Heart left ventricle (tissue), 16 donors: ENCODE measurements at regions of chr12 and their contacts with region 1.

Region 1: GRCh38 chr12:57865090-57865751 is 18.7 kb upstream of the CTDSP2 start:
- DNase-seq: peak; percentile 80 to 91 (median 88)
- ATAC-seq: peak; percentile 43 to 94 (median 88)
- H3K4me3 ChIP-seq: peak overlapping the region; percentile 30 to 62 (median 59)
- H3K27ac ChIP-seq: peak overlapping the region; percentile 92 to 98 (median 94)
- H3K4me1 ChIP-seq: peaks cover 0 to 29% (median 19%) of the 10 kb centered on the region in 12 donors
- H3K27me3 ChIP-seq: no peaks in the 10 kb centered on the region
- CTCF ChIP-seq: no peak
- POLR2A ChIP-seq: peak in 1 of 2 donors; percentile 80

Region 2: DNA sequence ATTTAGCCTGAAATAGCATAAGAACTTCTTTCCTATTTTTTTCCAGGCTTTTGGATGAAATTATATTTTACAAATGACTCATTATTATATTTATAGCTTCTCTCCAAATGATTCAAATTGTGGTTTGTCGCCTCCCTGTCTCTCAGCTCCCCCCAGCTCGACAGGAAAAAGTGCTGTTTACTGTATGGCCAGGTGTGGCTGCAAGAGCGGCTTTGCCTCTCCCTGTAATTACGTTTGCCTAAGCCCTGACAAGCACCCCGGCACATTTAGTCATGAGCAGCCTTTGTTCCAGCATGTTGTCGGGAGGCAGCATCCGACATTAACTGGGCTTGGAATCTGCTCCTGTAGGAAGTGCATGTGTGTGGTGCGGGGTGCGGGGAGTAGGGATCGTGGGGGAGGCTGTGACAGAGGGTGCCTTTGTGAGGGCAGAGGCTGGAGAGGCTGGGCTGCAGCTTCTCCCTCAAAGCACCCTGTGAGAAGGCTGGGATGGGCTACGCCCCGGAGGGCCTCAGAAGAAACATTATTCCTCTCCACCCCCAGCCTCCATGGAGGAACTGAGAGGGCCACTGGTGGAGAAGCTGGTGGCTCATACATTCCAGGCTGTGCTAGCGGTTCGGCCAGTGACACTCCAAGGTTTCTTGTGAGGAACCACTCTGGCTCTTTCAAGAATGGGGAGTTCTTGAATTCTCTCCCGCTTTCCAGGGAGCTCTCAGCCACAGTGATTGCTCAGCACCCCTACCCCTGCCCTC is 23.4 kb after region 1 on chr12:
- intact Hi-C with region 1: loop called in 2 of 10 experiments (anchors 2 kb)
- DNase-seq: peak in 3 of 5 donors; percentile 40 to 58 (median 55)
- ATAC-seq: peak; percentile 5 to 41 (median 19)
- H3K4me3 ChIP-seq: peak overlapping the region in 8 of 12 donors; percentile 10 to 43 (median 36)
- H3K27ac ChIP-seq: peak overlapping the region; percentile 64 to 99 (median 92)
- H3K4me1 ChIP-seq: peaks cover 10 to 75% (median 53%) of the 10 kb centered on the region in 12 donors
- H3K27me3 ChIP-seq: no peaks in the 10 kb centered on the region
- CTCF ChIP-seq: no peak
- POLR2A ChIP-seq: no peak

Region 3: GRCh38 chr12:57904848-57905811 is 39.9 kb after region 1 on chr12:
- intact Hi-C with region 1: no loop called
- DNase-seq: peak; percentile 78 to 86 (median 82)
- ATAC-seq: peak; percentile 72 to 94 (median 93)
- H3K4me3 ChIP-seq: peak overlapping the region in 8 of 12 donors; percentile 14 to 45 (median 30)
- H3K27ac ChIP-seq: peak overlapping the region in 2 of 12 donors; percentile 6 to 42
- H3K4me1 ChIP-seq: peaks cover 0 to 10% (median 5%) of the 10 kb centered on the region in 12 donors
- H3K27me3 ChIP-seq: peaks cover 0 to 6% (median 0%) of the 10 kb centered on the region in 9 donors
- CTCF ChIP-seq: peak; percentile 100
- POLR2A ChIP-seq: no peak

Region 4: GRCh38 chr12:57952766-57953165 is 87.5 kb after region 1 on chr12:
- intact Hi-C with region 1: no loop called
- DNase-seq: no peak
- ATAC-seq: no peak
- H3K4me3 ChIP-seq: no peak overlapping the region
- H3K27ac ChIP-seq: no peak overlapping the region
- H3K4me1 ChIP-seq: no peaks in the 10 kb centered on the region
- H3K27me3 ChIP-seq: no peaks in the 10 kb centered on the region
- CTCF ChIP-seq: no peak
- POLR2A ChIP-seq: no peak